ENCODE measurements at regions of chr2 and their contacts with region 1.

Region 1: DNA sequence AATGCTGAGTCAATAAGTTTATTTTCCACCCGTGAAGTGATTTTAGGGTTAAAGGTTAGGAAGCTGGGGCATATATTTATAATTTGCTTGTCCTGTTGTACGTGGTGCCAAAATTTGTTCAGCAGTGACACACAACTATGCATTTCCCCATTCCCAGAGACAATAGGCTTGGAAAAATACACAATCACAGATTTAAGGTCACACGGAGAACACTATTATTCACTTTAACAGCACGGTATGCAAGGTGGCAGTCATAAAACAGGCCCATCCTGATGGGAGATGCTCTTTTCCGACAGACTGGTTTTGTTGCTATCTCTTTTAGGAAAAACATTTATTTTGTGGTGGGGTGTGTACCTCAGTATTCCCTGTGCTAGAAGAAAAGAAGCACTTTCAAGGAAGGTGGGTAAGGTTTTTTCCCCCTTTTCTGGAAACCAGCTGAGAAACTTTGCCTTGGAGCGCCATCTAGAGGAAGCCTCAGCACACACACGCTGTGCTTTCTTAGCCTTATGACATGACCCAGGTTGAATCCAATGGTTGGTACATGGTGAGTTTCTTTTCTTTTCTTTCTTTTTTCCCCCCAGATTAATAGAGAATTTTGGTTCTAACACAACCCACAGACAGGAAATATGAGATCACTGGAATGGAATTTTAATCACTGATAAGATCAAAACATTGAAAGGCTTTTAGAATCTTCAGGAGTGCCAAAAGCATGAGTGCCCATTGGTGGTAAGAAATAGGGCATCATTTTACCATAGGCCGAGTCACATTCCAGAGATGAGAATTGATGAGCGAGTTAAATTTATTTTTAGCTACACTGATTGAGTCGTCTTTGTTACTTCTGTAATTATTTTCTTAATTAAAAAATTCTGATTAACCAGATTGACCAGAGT is 332.1 kb downstream of the AGPS start:
- DNase-seq: peak; percentile 12 to 86 (median 70)

Region 2: GRCh38 chr2:177164584-177165052 is 560.0 kb before region 1 on chr2:
- intact Hi-C with region 1: loop called (anchors 10 kb)
- DNase-seq: peak; percentile 81 to 96 (median 90)

Region 3: DNA sequence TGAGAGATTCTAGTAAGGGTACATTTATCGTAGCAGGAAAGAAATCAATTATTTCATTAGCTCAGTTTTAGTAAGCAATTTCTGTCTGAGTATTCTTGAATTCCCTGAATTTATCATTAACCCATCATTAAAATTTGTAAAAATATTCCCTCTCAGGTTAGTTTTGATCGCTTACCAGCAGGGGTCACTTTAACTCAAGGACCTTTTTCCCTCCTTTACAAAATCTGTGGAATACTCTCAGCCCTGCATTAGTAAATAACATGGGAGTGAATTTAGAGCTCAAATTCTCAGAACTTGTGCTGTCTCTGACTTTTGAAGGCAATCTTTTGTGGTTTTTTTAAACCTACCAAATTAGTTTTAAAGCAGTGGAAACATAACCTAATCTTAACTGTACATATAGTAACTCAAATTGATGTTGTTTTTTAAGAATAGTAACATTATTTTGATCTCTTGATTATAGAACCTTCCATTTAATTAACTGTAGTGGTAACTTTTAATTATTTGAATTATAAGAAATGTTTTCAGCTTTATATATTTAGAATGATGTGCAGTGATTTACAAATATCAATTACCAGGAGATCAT is 234.8 kb before region 1 on chr2:
- intact Hi-C with region 1: loop called (anchors 10 kb)
- DNase-seq: peak in 2 of 42 donors; percentile 20 to 29

Region 4: DNA sequence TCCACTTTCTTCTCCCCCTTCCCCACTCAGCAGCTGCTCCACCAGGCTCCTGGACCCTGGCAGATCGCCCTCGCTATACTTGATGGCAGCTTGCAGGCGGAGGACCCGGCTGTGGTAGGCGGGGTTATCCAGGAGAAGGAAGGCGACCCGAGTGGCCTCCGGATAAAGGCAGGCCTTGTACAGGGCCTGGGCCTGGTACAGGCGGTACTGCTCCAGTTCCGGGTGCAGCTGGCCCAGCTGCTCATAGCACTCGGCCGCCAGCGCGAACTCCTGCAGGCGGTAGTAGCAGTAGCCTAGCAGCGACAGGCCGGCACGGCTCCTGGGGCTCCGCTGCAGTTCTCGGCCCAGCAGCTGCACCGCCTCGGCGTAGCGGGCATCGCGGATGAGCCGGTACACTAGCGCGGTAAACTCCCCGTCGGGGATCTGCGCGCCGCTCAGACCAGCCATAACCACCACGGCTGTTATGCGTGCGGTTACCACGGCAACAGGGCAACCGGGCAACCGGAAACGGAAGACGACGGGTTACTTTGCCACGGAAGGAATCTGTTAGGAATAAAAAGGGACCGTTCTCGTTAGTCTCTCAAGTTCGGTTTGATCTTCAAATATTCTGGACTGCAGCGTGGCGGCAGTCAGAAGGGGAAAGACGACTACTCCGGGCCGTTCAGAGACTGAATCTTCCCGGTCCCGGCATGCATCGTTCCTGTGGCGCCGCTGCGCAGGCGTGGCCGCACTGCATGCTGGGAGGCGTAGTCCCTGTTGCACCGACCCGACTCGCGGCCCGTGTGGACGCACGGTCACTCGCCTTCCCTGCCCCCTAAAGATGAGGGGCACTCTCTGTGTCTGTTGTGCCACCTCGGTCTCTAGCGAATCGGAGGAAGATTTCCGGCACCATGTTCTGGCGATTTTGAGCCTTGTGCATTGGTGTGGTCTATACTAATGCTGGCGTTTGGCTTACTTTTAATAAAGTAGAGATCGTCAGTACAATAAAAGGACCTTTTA is 106.1 kb before region 1 on chr2:
- intact Hi-C with region 1: loop called (anchors 10 kb)
- DNase-seq: peak; percentile 89 to 98 (median 95)